Body of pancreas (tissue), 4 donors: ENCODE measurements at regions of chr22 and their contacts with region 1.

Region 1: GRCh38 chr22:39123751-39124601 is 26.9 kb downstream of the APOBEC3H start:
- DNase-seq: no peak
- ATAC-seq: no peak
- H3K4me3 ChIP-seq: no peak overlapping the region
- H3K27ac ChIP-seq: no peak overlapping the region
- H3K4me1 ChIP-seq: no peaks in the 10 kb centered on the region
- H3K27me3 ChIP-seq: no peaks in the 10 kb centered on the region
- CTCF ChIP-seq: no peak
- POLR2A ChIP-seq: no peak

Region 2: GRCh38 chr22:38777087-38777671 is 346.8 kb before region 1 on chr22:
- intact Hi-C with region 1: loop called (anchors 10 kb)
- DNase-seq: no peak
- ATAC-seq: no peak
- H3K4me3 ChIP-seq: no peak overlapping the region
- H3K27ac ChIP-seq: no peak overlapping the region
- H3K4me1 ChIP-seq: no peaks in the 10 kb centered on the region
- H3K27me3 ChIP-seq: no peaks in the 10 kb centered on the region
- CTCF ChIP-seq: no peak
- POLR2A ChIP-seq: no peak

Region 3: DNA sequence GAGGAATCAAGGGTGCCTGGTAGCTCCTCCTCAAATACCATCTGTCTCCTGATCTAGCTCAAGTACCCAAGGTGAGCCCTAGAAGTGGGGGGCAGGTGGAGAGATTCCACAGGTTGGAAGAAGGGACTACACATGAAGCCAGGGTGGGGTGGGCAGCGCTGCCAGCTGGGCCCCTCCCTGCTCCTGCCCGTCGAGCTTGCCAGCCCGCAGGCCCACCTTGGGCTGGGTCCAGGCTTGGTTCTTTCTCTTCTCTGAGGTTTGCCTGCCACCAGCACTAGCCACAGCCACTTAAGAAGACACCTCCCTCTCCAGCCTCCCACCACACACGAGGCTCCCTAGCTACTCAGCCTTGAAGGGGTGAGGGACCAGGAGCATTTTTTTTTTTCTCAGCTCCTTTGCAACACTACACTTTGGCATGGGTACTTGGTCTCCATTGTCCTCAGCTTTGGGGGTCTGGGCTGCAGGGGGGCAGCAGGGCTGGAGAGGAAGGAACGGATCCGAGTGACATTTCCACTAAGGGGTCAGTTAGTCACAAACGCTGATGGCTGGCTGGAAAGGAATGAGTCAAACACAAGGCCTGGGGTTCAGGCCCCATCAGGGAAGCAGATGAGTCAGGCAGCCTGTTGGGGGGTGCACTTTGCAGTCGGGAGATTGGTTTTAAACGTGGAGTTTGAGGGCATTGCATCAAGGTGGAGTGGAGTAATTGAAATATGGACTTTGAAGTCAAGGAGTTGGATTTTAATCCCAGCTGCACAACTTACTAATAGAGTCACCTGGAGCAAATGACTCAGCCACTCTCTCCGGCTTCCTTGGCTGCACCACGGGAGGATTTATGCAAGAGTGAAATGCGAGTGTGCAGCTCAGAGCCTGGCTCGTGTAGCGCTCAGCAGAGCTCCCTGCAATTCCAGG is 272.8 kb before region 1 on chr22:
- intact Hi-C with region 1: no loop called
- DNase-seq: no peak
- ATAC-seq: no peak
- H3K4me3 ChIP-seq: no peak overlapping the region
- H3K27ac ChIP-seq: no peak overlapping the region
- H3K4me1 ChIP-seq: no peaks in the 10 kb centered on the region
- H3K27me3 ChIP-seq: no peaks in the 10 kb centered on the region
- CTCF ChIP-seq: no peak
- POLR2A ChIP-seq: no peak

Region 4: DNA sequence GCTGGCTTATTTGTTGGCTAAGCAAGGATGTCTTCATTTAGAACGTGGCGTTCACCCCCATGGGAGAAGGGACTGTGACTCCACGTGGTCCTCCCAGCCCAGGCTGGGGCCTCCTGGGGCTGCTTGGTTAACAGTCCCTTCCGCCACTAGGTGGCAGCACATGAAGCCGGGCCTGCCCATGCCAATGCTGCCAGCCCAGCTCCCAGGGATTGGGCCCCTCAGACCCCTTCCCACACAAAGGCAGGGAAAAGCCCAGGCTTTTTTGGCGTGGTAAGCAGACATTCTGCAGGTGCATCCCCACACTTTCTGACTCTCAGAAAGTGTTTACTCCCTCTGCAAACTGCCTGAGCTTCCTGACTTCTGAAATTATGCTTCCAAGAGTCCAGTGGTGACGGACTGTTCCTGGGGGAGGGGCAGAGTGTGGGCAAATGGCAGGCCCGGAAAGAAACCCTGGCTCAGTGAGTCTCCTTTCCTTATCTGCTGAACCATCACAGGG is 255.0 kb before region 1 on chr22:
- intact Hi-C with region 1: loop called (anchors 5 kb)
- DNase-seq: peak; percentile 79 to 88 (median 84)
- ATAC-seq: peak; percentile 16
- H3K4me3 ChIP-seq: no peak overlapping the region
- H3K27ac ChIP-seq: no peak overlapping the region
- H3K4me1 ChIP-seq: peaks cover 53% of the 10 kb centered on the region
- H3K27me3 ChIP-seq: no peaks in the 10 kb centered on the region
- CTCF ChIP-seq: peak; percentile 73 to 92 (median 80)
- POLR2A ChIP-seq: no peak

Region 5: GRCh38 chr22:39021552-39022250 is 102.3 kb before region 1 on chr22:
- intact Hi-C with region 1: no loop called
- DNase-seq: no peak
- ATAC-seq: no peak
- H3K4me3 ChIP-seq: no peak overlapping the region
- H3K27ac ChIP-seq: peak overlapping the region; percentile 34 to 77 (median 64)
- H3K4me1 ChIP-seq: no peaks in the 10 kb centered on the region
- H3K27me3 ChIP-seq: no peaks in the 10 kb centered on the region
- CTCF ChIP-seq: no peak
- POLR2A ChIP-seq: no peak

Region 6: DNA sequence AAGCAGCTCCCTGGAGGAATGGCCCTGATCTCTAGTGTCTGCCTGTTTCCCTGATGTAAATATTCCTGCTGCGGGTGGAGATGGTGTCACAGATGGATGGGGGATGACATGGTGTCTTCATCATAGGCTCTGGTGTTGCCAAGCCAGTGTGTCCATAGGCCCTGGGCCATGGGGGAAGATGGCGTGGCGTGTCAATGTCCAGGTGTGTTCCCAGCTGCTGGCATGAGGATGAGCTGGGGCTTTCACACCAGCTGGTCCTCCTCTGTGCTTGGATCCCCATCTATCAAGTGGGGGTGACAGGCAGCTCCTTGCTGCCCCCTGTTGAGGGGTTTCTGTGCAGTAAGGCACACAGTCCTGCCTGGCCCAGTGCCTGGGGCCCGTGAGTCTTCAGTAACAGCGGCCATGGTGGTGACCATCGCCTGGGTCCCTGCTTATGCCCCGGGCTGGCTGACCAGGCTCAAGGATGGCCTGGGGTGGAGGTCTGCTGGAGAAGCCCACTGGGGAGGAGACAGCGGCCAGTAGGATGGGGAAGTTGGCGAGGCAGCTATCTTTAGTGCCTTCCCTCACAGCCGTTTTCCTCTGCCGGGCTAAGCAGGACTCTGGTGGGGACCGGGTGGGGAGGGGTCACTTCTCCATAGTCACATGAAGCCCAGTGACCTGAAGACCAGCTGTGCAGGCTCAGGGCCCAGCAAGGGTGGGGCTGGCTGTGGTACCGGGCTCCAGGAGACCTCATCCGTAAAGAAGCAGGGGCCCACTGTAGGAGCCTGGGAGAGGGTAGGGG is 182.8 kb after region 1 on chr22:
- intact Hi-C with region 1: no loop called
- DNase-seq: peak in 2 of 4 donors; percentile 62 to 75
- ATAC-seq: no peak
- H3K4me3 ChIP-seq: no peak overlapping the region
- H3K27ac ChIP-seq: no peak overlapping the region
- H3K4me1 ChIP-seq: peaks cover 8% of the 10 kb centered on the region
- H3K27me3 ChIP-seq: no peaks in the 10 kb centered on the region
- CTCF ChIP-seq: peak in 4 of 7 experiments; percentile 26 to 50 (median 33)
- POLR2A ChIP-seq: no peak